Upper lobe of right lung (tissue), 1 donor: ENCODE measurements at regions of chr3 and their contacts with region 1.

Region 1: DNA sequence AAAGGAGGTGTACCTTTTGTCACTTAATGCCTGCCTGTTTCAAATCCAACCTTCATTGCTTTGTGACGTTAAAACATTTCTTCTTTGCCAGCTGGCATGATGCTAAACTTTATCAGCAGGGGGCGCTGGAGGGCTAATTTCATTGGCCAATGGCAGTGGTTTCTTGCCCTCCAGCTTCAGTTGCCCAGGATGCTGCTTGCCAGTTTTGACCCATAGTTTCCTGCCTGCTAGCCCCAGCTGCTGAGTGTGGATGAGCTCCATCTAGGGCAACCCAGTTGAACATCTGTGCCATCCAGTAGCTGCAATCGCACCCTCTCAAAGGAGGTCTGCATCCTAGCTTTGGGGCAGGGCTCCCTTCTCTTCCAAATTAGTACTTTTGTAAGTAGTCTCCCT is 22.1 kb downstream of the ACKR2 start:
- DNase-seq: peak; percentile 76
- ATAC-seq: peak; percentile 87
- H3K4me3 ChIP-seq: no peak overlapping the region
- H3K27ac ChIP-seq: no peak overlapping the region
- H3K4me1 ChIP-seq: peaks cover 3% of the 10 kb centered on the region
- H3K27me3 ChIP-seq: no peaks in the 10 kb centered on the region
- CTCF ChIP-seq: peak; percentile 76

Region 2: DNA sequence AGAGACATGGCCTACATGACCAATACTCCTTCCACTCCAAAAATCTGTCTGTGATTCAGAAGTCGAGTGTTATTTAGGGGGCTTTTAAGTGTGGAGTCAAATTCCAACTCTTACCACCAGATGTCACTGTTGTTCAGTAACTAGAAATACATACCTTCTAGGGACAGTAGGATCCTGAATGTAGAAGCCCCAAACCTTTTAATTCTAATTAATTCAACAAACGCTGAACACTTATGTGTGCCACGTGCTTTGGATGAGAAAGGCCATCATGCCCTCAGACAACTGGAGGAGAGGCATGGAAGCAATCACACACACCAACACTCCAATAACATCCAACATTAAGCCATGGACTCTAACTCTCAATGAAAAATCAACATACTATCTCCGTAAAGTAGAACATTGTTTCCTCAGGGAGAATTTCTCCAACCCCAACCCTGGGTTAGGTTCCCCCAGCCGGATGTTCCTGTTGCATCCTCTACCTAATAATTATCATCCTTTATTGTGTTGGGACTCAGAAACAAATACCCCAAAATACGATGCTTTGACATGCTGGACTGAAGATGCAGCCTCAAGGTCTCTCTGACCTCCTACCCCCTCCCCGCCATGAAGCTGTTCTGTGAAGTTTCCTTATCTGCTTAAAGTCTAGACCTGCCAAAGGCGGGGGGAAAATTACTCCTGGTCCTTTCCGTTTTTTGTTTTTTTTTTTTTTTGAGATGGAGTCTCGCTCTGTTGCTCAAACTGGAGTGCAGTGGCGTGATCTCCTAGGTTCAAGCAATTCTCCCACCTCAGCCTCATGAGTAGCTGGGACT is 50.2 kb before region 1 on chr3:
- intact Hi-C with region 1: loop called (anchors 5 kb)
- DNase-seq: no peak
- ATAC-seq: peak; percentile 87
- H3K4me3 ChIP-seq: no peak overlapping the region
- H3K27ac ChIP-seq: no peak overlapping the region
- H3K4me1 ChIP-seq: peaks cover 10% of the 10 kb centered on the region
- H3K27me3 ChIP-seq: no peaks in the 10 kb centered on the region
- CTCF ChIP-seq: peak; percentile 85

Region 3: DNA sequence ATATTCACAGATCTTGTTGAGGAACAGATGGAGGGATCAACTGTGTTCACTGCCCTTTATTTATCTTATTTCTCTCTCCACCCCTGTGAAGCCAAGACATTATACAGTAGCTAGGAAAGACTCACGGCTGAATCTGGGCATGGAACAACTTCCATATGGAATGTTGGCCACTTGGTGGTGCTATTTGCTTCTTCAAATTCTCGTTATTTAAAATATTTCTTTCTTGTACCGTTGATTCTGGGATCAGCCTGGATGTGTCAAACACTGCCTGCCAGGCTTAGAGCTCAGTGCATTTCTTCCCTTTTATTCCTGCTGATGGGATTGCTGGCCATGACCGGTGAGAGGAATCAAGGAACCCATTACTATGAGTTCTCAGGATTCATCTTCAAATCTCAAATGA is 130.3 kb after region 1 on chr3:
- intact Hi-C with region 1: no loop called
- DNase-seq: no peak
- ATAC-seq: peak; percentile 63
- H3K4me3 ChIP-seq: no peak overlapping the region
- H3K27ac ChIP-seq: no peak overlapping the region
- H3K4me1 ChIP-seq: no peaks in the 10 kb centered on the region
- H3K27me3 ChIP-seq: no peaks in the 10 kb centered on the region
- CTCF ChIP-seq: peak; percentile 68